ENCODE measurements at regions of chrX and their contacts with region 1.

Region 1: GRCh38 chrX:48493890-48494364 is 14.9 kb upstream of the PORCN start:
- DNase-seq: peak in 1 of 2 experiments; percentile 58
- H3K4me3 ChIP-seq: no peak overlapping the region
- H3K27ac ChIP-seq: no peak overlapping the region
- H3K4me1 ChIP-seq: no peaks in the 10 kb centered on the region; a peak in 1 of 7 replicates
- H3K27me3 ChIP-seq: no peaks in the 10 kb centered on the region
- CTCF ChIP-seq: peak in 2 of 3 experiments; percentile 52 to 62; a peak in 3 of 4 replicates
- EP300 ChIP-seq: no peak
- POLR2A ChIP-seq: no peak
- RAD21 ChIP-seq: peak; percentile 77 to 84

Region 2: GRCh38 chrX:48083212-48083611 is 410.7 kb before region 1 on chrX:
- CTCF ChIA-PET with region 1: interaction called, 22 read pairs
- POLR2A ChIA-PET with region 1: no interaction called
- DNase-seq: peak; percentile 9 to 49
- H3K4me3 ChIP-seq: no peak overlapping the region
- H3K27ac ChIP-seq: no peak overlapping the region
- H3K4me1 ChIP-seq: no peaks in the 10 kb centered on the region
- H3K27me3 ChIP-seq: no peaks in the 10 kb centered on the region
- CTCF ChIP-seq: peak; percentile 6 to 54 (median 49)
- EP300 ChIP-seq: no peak
- POLR2A ChIP-seq: no peak
- RAD21 ChIP-seq: peak; percentile 68 to 76

Region 3: DNA sequence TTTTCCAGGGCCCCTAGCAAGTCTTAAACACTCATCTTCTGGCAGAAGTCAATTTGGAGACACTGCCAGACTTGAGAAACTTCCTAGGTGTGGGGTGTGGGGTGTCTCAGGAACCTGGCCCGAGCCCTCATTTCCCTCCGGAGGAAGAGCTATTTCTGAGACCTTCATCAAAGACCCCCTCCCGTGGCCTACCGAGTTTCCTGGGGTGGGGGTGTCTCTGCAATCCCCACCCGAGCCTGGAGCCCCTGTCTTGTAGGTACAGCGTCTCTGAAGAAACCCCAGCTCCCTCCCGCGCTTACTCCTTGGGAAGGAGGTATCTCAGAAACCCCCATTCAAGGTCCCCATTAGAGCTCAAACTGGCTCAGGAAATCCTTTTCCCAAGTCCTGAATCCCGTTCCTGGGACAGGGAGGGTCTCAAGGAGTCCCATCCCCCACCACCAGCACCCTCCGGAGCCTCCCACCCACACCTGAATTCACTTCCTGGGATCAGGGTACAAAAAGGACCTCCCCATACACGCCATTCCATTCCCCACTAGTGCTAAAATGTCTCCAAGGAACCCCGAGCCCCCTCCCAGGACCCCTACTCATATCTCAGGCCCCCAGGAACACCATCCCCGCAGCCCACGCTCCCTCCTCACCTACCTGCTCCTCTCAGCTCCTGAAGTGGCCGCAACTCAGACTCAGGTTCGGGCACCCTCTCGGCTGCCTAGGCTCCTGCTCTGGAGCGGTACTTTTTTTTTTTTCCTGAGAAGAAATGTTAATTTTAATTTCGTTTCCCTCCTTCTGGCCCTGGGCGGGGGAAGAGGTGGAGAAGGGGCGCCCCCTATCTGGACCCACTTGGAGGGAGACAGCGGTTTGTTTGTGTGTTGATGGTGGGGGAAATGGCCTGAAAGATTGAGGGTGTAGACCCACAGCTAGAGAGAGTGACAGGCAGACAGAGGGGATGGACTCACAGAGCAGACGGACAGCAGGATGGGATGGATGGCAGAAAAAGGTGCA is 24.9 kb before region 1 on chrX:
- CTCF ChIA-PET with region 1: interaction called, 32 read pairs
- POLR2A ChIA-PET with region 1: interaction called, 4 read pairs
- DNase-seq: peak in 1 of 2 experiments; percentile 61
- H3K4me3 ChIP-seq: peak overlapping the region; percentile 51 to 90 (median 70)
- H3K27ac ChIP-seq: no peak overlapping the region
- H3K4me1 ChIP-seq: peaks cover 10 to 20% (median 14%) of the 10 kb centered on the region in 4 experiments
- H3K27me3 ChIP-seq: no peaks in the 10 kb centered on the region
- CTCF ChIP-seq: peak in 2 of 3 experiments; percentile 27 to 39; a peak in 3 of 4 replicates
- EP300 ChIP-seq: no peak
- POLR2A ChIP-seq: no peak
- RAD21 ChIP-seq: peak; percentile 49 to 50; a peak in 3 of 4 replicates

Region 4: GRCh38 chrX:48631350-48632090 is 137.6 kb after region 1 on chrX:
- CTCF ChIA-PET with region 1: no interaction called
- POLR2A ChIA-PET with region 1: no interaction called
- DNase-seq: peak; percentile 59 to 66
- H3K4me3 ChIP-seq: no peak overlapping the region
- H3K27ac ChIP-seq: no peak overlapping the region
- H3K4me1 ChIP-seq: no peaks in the 10 kb centered on the region
- H3K27me3 ChIP-seq: no peaks in the 10 kb centered on the region
- CTCF ChIP-seq: peak in 2 of 3 experiments; percentile 61 to 67; a peak in 3 of 4 replicates
- EP300 ChIP-seq: peak in 1 of 2 experiments; percentile 60; a peak in 1 of 3 replicates
- POLR2A ChIP-seq: no peak
- RAD21 ChIP-seq: peak; percentile 91